Sciatic nerve (tissue), 2 donors: ENCODE measurements at regions of chr1 and their contacts with region 1.

Region 1: GRCh38 chr1:174262349-174263241 is 103.3 kb downstream of the RABGAP1L start:
- DNase-seq: no peak
- ATAC-seq: peak; percentile 93

Region 2: DNA sequence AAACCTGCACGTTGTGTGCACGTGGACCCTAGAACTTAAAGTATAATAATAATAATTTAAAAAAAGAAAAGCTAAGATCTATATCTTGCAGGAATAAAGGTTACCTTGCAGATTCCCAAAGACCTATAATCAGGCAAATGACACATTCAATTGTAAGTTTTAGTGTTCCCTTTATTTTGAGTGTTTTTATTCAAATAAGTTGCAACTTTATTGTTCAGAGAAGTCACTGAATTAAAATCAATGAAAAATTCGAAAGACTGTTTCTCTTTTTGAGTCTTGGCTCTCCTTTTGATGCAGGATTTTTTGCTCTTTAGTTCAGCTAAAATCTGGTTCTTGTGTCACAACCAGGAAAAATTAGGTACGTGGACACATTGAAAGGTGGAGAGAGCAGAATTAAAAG is 1027.7 kb before region 1 on chr1:
- intact Hi-C with region 1: no loop called
- DNase-seq: no peak
- ATAC-seq: no peak

Region 3: DNA sequence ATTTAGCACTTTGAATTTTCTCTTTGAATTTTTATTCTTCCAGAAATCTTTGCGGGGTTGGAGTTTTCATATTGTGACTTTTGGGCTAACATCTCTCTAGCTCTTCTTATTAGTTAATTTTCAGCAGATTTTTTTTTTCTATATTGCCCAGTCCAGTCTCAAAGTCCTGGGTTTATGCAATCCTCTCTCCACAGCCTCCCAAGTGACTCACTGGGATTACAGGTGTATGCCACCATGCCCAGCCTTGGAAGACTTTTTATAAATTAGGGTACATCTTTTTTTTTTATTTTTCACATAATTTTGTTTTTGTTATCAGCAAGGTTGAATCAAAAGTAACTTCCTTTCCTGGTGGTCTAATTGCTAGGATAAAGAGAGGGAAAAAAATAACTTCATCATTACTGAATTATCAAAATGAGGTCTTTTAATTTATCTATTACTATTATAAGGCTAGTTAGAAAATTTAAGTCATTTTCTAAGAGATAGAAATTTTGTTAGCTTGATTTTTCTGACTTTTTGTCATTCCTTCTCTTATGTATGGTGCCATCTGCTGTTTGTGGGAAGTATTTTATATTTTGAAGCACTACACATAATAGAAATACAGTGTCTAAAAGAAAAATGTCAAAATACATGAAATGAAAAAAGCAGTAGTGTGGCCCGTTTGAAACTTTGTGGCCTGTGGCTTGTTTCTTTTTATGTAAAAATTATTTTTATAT is 463.7 kb after region 1 on chr1:
- intact Hi-C with region 1: loop called (anchors 5 kb)
- DNase-seq: no peak
- ATAC-seq: no peak